ENCODE measurements at regions of chr2 and their contacts with region 1.

Region 1: DNA sequence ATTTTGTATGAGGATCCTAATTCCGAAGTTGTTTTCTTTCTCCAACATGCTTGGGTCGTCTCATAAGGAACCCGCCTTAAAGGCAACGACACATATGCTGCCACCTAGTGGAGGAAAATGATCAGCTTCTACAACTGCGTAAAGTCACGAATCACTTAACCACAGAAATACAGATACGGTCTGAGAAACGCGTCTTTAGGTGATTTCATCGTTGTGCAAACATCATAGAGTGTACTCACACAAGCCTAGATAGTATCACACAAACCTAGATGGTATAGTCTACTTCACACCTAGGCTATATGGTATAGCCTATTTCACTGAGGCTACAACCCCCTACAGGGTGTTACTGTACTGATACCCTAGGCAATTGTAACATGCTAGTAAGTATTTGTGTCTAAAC is 13.1 kb downstream of the GNLY start:
- DNase-seq: peak; percentile 73
- CTCF ChIP-seq: peak; percentile 83

Region 2: GRCh38 chr2:85648619-85649018 is 58.7 kb before region 1 on chr2:
- CTCF ChIA-PET with region 1: interaction called, 15 read pairs
- POLR2A ChIA-PET with region 1: no interaction called
- DNase-seq: no peak
- CTCF ChIP-seq: peak; percentile 46

Region 3: DNA sequence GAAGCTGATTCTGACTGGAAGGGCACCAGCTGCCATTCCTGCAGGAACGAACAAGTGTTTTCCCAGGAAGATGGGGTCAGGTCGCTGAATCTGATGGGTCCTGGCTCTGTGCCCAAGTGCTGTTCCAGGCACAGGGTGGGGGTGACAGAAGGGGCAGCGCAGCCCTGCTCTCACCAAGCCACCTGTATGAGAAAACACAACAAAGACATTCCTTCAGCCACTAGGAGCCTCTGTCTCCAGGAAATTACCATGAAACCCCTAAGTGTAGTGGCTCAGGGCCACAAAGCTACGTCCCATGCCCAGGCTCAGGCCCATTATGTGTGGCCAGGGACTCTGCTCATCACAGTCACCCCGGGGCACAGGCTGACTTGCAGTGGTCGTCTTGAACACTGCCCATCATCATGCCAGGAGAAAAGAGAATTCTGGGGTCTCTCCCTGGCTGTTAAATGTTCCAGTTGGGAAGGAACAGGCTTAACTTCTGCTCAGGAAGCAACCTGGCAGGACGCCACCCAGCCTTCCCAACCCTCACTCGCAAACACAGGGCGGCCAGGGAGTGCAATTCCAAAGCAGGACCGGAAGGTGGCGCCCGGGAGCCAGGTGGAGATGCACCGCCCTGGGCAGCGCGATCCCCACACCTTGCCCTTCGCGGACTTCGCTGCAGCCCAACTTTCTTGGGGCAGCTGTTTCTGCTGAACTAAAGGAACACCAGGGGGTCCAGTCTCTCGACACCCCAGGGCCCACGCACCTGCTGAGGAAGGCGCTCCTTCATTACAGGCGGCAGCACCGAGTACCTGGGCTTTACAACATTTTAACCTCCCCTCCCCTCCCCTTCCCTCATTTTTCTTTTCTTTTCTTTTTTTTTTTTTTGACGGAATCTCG is 28.3 kb before region 1 on chr2:
- CTCF ChIA-PET with region 1: interaction called, 128 read pairs
- POLR2A ChIA-PET with region 1: no interaction called
- DNase-seq: peak; percentile 91
- CTCF ChIP-seq: peak; percentile 99

Region 4: GRCh38 chr2:85723707-85724360 is 16.5 kb after region 1 on chr2:
- CTCF ChIA-PET with region 1: interaction called, 73 read pairs
- POLR2A ChIA-PET with region 1: no interaction called
- DNase-seq: no peak
- CTCF ChIP-seq: no peak